PC-3 (cell line): ENCODE measurements at regions of chr3 and their contacts with region 1.

Region 1: GRCh38 chr3:170330366-170330765 is 27.1 kb upstream of the SKIL start:
- DNase-seq: peak; percentile 97
- ATAC-seq: peak; percentile 96
- H3K4me3 ChIP-seq: no peak overlapping the region
- H3K27ac ChIP-seq: peak overlapping the region; percentile 24; the same call in 1 of the 2 replicates
- H3K4me1 ChIP-seq: peaks cover 17% of the 10 kb centered on the region
- H3K27me3 ChIP-seq: no peaks in the 10 kb centered on the region
- CTCF ChIP-seq: no peak

Region 2: GRCh38 chr3:170307671-170308403 is 22.5 kb before region 1 on chr3:
- CTCF ChIA-PET with region 1: interaction called, 13 read pairs
- POLR2A ChIA-PET with region 1: no interaction called
- intact Hi-C with region 1: no loop called
- DNase-seq: peak; percentile 92
- ATAC-seq: peak; percentile 80
- H3K4me3 ChIP-seq: no peak overlapping the region
- H3K27ac ChIP-seq: peak overlapping the region; percentile 10; the same call in 1 of the 2 replicates
- H3K4me1 ChIP-seq: peaks cover 12% of the 10 kb centered on the region
- H3K27me3 ChIP-seq: no peaks in the 10 kb centered on the region
- CTCF ChIP-seq: no peak

Region 3: DNA sequence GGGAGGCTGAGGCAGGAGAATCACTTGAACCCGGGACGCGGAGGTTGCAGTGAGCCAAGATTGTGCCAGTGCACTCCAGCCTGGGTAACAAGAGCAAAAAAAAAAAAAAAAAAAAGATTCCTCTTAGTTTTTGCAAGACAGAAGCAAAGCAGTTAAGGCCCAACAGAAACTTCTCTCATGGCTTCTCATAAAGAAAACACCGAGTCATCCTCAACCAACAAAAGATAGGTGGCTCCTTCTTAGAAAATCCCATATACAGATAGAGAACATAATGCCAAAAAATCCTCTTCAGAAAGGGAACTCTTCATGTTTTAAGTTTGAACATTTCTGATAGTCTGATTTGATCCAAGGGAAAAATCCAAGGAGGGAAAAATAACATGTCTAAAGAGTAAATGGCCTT is 14.6 kb after region 1 on chr3:
- CTCF ChIA-PET with region 1: no interaction called
- POLR2A ChIA-PET with region 1: no interaction called
- intact Hi-C with region 1: loop called (anchors 2 kb)
- DNase-seq: peak; percentile 27
- ATAC-seq: no peak
- H3K4me3 ChIP-seq: no peak overlapping the region
- H3K27ac ChIP-seq: peak overlapping the region; percentile 25; the same call in 1 of the 2 replicates
- H3K4me1 ChIP-seq: peaks cover 7% of the 10 kb centered on the region; the same call in 1 of the 2 replicates
- H3K27me3 ChIP-seq: no peaks in the 10 kb centered on the region
- CTCF ChIP-seq: no peak

Region 4: DNA sequence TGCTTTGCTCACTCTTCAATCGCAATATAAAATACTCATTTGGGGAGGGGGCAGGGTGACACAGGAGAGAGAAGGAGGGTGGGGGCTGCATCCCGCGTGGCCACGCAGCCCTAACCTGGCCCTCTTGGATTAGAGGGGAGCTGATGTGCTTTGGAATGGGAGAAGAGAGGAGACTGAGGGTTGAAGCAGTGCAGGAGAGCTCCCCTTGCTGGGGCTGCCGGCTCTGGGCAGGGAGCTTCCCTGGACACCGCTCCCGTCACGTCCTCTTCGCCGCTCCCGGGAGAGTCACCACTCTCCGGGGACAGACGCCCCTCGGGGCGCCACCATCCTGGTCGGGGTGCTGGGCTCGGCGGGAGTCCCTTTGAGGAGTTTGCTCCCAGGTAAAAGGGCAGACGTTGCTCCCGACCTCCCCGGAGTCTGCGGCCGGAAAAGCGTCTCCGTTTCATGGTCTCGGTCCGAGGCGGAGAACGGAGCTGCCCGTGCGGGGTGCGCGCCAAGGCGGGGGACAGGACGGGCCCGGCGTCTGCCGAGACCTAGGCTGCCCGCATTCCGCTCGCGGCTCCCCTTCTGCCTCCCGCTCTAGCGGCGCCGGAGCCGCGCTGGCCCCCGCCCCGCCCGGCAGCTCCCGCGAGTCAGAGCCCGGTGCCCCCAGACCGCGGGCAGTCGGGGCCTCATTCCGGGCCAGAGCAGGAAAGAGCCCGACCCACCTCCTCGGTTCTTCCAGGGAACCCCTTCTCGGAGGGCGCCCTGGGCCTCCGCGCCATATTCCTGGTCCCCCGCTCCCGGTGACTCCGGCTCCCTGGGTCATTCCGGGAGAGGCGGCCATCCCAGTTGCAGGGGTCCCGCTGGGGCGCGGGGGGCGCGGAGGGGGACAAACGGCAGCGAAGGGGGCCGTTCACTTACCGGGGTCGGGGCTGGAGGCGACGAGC is 254.9 kb after region 1 on chr3:
- CTCF ChIA-PET with region 1: no interaction called
- POLR2A ChIA-PET with region 1: interaction called, 19 read pairs
- intact Hi-C with region 1: no loop called
- DNase-seq: no peak
- ATAC-seq: no peak
- H3K4me3 ChIP-seq: no peak overlapping the region
- H3K27ac ChIP-seq: no peak overlapping the region
- H3K4me1 ChIP-seq: no peaks in the 10 kb centered on the region
- H3K27me3 ChIP-seq: no peaks in the 10 kb centered on the region
- CTCF ChIP-seq: no peak